HCT116 (cell line): ENCODE measurements at regions of chr4 and their contacts with region 1.

Region 1: GRCh38 chr4:52712172-52712990 is 38.8 kb downstream of the ERVMER34-1 start:
- DNase-seq: peak; percentile 88
- ATAC-seq: peak; percentile 96
- H3K4me3 ChIP-seq: peak overlapping the region; percentile 57 to 73
- H3K27ac ChIP-seq: peak overlapping the region; percentile 95
- H3K4me1 ChIP-seq: peaks cover 17 to 29% of the 10 kb centered on the region in 2 experiments
- H3K27me3 ChIP-seq: no peaks in the 10 kb centered on the region
- CTCF ChIP-seq: no peak
- POLR2A ChIP-seq: peak; percentile 89
- RAD21 ChIP-seq: no peak

Region 2: DNA sequence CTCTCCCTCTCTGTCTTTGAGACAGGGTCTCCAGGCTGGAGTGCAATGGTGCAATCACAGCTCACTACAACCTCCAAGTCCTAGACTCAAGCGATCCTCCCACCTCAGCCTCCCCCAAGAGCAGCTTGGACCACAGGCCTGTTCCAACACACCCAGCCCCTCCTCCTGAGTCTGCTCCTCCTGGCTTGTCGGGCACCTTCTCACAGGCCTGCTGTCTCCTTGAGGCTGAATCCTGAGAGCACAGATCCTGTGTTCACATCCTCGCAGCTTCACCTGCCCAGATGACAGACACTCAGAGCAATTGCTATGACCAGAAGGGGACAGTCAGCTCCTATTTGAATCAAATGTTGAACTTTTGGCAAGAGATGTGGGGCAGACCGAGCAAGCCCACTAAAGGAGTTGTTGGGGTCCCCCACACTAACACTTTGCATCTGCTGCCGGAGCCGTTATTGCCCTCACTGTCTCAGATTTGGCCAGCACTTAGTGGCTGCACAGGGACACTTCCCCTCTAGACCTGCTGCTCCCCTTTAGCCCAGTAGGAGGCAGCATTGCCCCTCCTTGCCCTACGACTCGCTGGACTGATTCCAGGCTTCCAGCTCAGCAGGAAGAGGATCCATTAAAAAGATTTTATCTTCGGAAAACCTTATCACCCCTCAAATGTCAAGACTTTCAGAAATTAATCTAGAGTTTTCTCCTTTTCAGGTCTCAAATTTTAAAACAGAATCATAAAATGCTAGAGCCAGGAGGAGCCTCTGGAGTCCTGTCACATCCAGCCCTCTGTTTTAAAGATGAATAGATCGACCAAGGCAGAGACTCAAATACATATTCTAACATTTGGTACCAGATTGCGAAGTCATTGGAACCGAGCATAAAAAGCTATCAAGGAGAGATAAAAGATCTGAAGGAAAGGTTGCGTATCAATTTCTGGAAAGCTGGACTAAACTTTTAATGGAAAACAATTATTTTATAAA is 167.0 kb before region 1 on chr4:
- CTCF ChIA-PET with region 1: interaction called, 5 read pairs
- POLR2A ChIA-PET with region 1: interaction called, 8 read pairs
- RAD21 ChIA-PET with region 1: no interaction called
- intact Hi-C with region 1: loop called (anchors 2 kb)
- DNase-seq: peak; percentile 52
- ATAC-seq: peak; percentile 97
- H3K4me3 ChIP-seq: no peak overlapping the region; a peak in 1 of 4 replicates
- H3K27ac ChIP-seq: no peak overlapping the region
- H3K4me1 ChIP-seq: peaks cover 0 to 3% of the 10 kb centered on the region in 2 experiments; a peak in 1 of 4 replicates
- H3K27me3 ChIP-seq: no peaks in the 10 kb centered on the region
- CTCF ChIP-seq: peak; percentile 84 to 98 (median 95)
- POLR2A ChIP-seq: no peak
- RAD21 ChIP-seq: peak; percentile 94

Region 3: DNA sequence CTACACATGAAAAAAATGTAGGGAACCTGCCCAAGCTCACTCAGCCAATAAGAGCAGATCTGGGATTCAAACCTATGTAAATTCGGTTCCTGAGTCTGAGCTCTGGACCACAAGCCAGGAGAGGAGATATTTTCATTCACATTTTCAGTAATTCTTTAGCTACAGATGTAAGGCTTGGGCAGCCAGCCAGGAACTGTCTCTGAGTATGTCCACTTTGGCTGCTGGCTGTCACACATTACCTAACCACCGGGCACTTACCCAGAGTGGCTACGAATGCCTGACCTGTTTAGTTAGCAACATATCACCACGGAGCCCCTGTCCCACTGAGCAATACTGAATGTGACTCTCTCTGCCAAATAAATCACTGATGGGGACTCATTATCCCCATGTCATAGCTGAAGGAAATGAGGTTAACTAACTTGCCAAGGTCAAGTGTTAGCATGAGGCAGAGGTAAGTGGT is 68.6 kb before region 1 on chr4:
- CTCF ChIA-PET with region 1: no interaction called
- POLR2A ChIA-PET with region 1: interaction called, 5 read pairs
- RAD21 ChIA-PET with region 1: no interaction called
- intact Hi-C with region 1: loop called (anchors 5 kb)
- DNase-seq: peak; percentile 4
- ATAC-seq: no peak
- H3K4me3 ChIP-seq: no peak overlapping the region
- H3K27ac ChIP-seq: peak overlapping the region; percentile 94
- H3K4me1 ChIP-seq: peaks cover 49 to 81% of the 10 kb centered on the region in 2 experiments
- H3K27me3 ChIP-seq: no peaks in the 10 kb centered on the region
- CTCF ChIP-seq: no peak
- POLR2A ChIP-seq: no peak
- RAD21 ChIP-seq: no peak

Region 4: DNA sequence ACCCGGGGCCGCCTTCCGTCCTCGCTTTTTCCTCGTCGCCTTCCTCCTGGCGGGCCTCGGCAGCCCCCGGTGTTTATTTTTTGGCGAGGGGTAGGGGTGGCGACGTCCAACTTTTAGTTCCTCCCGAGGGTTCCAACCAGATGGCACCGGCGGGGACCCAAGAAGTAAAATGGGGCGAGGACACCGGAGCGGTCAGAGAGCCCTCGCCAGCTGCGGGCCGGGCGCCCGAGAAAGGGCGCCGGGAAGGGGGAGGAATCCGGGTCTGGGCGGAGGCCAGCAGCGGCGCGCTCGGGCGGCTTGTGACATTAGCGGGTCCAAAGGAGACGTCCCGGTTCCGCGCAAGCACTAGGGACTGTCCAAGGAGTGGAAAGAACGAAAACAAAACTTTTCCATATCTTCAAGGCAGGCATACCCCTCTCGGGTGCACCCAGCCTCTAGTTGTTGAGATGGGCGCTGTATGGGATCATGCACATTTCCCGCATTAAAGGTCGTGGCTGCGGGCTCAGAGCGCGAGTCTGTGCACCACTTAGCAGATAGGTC is 52.6 kb before region 1 on chr4:
- CTCF ChIA-PET with region 1: no interaction called
- POLR2A ChIA-PET with region 1: interaction called, 6 read pairs
- RAD21 ChIA-PET with region 1: no interaction called
- intact Hi-C with region 1: loop called (anchors 2 kb)
- DNase-seq: no peak
- ATAC-seq: peak; percentile 35
- H3K4me3 ChIP-seq: peak overlapping the region; percentile 67 to 75
- H3K27ac ChIP-seq: peak overlapping the region; percentile 92
- H3K4me1 ChIP-seq: peaks cover 19 to 48% of the 10 kb centered on the region in 2 experiments
- H3K27me3 ChIP-seq: no peaks in the 10 kb centered on the region
- CTCF ChIP-seq: no peak
- POLR2A ChIP-seq: no peak
- RAD21 ChIP-seq: 0 out of 2 replicates have a peak, but pooled peaks have one; percentile 1

Region 5: DNA sequence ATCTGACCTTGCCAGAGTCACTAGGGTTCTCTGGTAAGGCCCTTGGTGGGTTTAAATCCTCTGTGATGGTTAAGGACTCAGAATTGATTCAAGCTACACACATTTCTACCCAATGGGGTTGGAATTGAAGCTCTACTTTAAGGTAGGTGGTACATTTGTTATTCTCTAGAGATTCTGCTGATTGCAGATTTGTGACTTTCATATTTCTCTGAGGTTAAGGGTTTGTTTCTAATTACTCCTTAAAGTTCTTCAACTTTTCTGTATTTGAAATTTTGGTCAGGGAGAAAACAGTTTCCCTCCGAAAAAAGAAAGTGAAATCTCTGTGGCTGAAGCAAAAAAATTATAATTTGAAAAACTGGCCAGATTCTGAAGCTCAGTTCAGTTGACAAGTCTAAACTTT is 27.5 kb before region 1 on chr4:
- CTCF ChIA-PET with region 1: no interaction called
- POLR2A ChIA-PET with region 1: interaction called, 10 read pairs
- RAD21 ChIA-PET with region 1: no interaction called
- intact Hi-C with region 1: no loop called
- DNase-seq: no peak
- ATAC-seq: no peak
- H3K4me3 ChIP-seq: no peak overlapping the region
- H3K27ac ChIP-seq: no peak overlapping the region
- H3K4me1 ChIP-seq: no peaks in the 10 kb centered on the region; a peak in 1 of 4 replicates
- H3K27me3 ChIP-seq: no peaks in the 10 kb centered on the region
- CTCF ChIP-seq: no peak
- POLR2A ChIP-seq: no peak
- RAD21 ChIP-seq: no peak

Region 6: GRCh38 chr4:52701207-52701606 is 11.2 kb before region 1 on chr4:
- CTCF ChIA-PET with region 1: no interaction called
- POLR2A ChIA-PET with region 1: interaction called, 16 read pairs
- RAD21 ChIA-PET with region 1: no interaction called
- intact Hi-C with region 1: no loop called
- DNase-seq: no peak
- ATAC-seq: no peak
- H3K4me3 ChIP-seq: no peak overlapping the region
- H3K27ac ChIP-seq: no peak overlapping the region
- H3K4me1 ChIP-seq: no peaks in the 10 kb centered on the region
- H3K27me3 ChIP-seq: no peaks in the 10 kb centered on the region
- CTCF ChIP-seq: no peak
- POLR2A ChIP-seq: no peak
- RAD21 ChIP-seq: no peak